K562 (cell line): ENCODE measurements at regions of chr12 and their contacts with region 1.

Region 1: GRCh38 chr12:122526683-122527477 is at the starts of genes KNTC1 and RSRC2:
- DNase-seq: peak; percentile 94 to 100 (median 96)
- ATAC-seq: peak; percentile 90
- H3K4me3 ChIP-seq: peak within 1 kb of the TSS; percentile 62
- H3K27ac ChIP-seq: peak within 1 kb of the TSS; percentile 99
- H3K4me1 ChIP-seq: peaks cover 4 to 21% of the 10 kb centered on the region in 2 experiments; a peak in 2 of 5 replicates
- H3K27me3 ChIP-seq: no peaks in the 10 kb centered on the region
- CTCF ChIP-seq: no peak
- EP300 ChIP-seq: peak; percentile 34
- POLR2A ChIP-seq: peak; percentile 99
- RAD21 ChIP-seq: no peak
- polyA plus RNA-seq, gene KNTC1: 38.9 to 57.8 TPM
- polyA plus RNA-seq, gene RSRC2: 52.6 to 72.3 TPM

Region 2: GRCh38 chr12:122064025-122064777 is 462.7 kb before region 1 on chr12:
- CTCF ChIA-PET with region 1: no interaction called
- POLR2A ChIA-PET with region 1: no interaction called
- in situ Hi-C with region 1: no loop called
- intact Hi-C with region 1: loop called (anchors 5 kb)
- DNase-seq: peak; percentile 96 to 99 (median 98)
- ATAC-seq: peak; percentile 97
- H3K4me3 ChIP-seq: peak overlapping the region; percentile 44
- H3K27ac ChIP-seq: peak overlapping the region; percentile 94
- H3K4me1 ChIP-seq: peaks cover 45 to 54% of the 10 kb centered on the region in 2 experiments
- H3K27me3 ChIP-seq: no peaks in the 10 kb centered on the region
- CTCF ChIP-seq: peak; percentile 71 to 88 (median 82)
- EP300 ChIP-seq: peak; percentile 50
- POLR2A ChIP-seq: peak; percentile 81
- RAD21 ChIP-seq: peak; percentile 44 to 62

Region 3: DNA sequence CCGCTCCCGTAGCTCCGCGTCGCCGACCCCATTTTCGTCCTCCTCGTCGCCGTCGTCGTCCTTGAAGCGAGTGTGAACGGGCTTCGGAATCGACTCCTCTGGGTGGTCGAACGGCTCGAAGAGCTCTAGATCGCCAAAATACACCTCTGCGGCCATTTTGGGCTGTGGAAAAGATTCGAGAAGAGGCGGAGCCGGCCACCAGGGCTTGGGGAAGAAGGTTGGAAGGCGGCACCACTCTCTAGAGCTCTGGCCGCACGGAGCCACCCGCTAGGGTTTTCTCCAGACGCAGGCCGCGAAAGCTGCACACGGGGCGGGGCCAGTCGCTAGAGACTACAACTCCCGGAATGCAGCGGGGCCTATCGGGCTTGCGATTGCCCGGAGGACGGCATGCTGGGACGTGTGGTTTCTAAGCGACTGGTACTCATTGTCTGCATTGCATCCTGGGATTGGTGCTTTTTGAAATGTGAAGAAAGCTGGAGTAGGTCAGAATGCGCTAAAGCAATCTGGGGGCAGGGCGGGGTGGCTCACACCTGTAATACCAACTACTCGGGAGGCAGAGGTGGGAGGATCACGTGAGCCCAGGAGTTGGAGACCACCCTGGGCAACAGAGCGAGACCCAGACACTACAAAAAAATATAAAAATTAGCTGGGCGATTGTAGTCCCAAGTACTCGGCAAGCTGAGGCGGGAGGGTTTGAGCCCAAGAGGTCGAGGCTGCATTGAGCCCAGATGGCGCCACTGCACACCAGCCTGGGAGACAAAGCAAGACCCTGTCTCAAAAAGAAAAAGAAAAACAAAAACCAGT is 26.0 kb before region 1 on chr12 and contains the start of gene ZCCHC8:
- CTCF ChIA-PET with region 1: no interaction called
- POLR2A ChIA-PET with region 1: interaction called, 62 read pairs
- in situ Hi-C with region 1: no loop called
- intact Hi-C with region 1: loop called (anchors 1 kb)
- DNase-seq: peak; percentile 89 to 99 (median 92)
- ATAC-seq: peak; percentile 91
- H3K4me3 ChIP-seq: peak within 1 kb of the TSS; percentile 94
- H3K27ac ChIP-seq: peak within 1 kb of the TSS; percentile 99
- H3K4me1 ChIP-seq: peaks cover 6 to 11% of the 10 kb centered on the region in 2 experiments; a peak in 3 of 5 replicates
- H3K27me3 ChIP-seq: no peaks in the 10 kb centered on the region
- CTCF ChIP-seq: peak in 2 of 3 experiments; percentile 12 to 16; a peak in 2 of 6 replicates
- EP300 ChIP-seq: peak; percentile 23; the same call in 1 of the 2 replicates
- POLR2A ChIP-seq: peak; percentile 96
- RAD21 ChIP-seq: no peak
- polyA plus RNA-seq, gene ZCCHC8: 14.8 to 20.7 TPM

Region 4: DNA sequence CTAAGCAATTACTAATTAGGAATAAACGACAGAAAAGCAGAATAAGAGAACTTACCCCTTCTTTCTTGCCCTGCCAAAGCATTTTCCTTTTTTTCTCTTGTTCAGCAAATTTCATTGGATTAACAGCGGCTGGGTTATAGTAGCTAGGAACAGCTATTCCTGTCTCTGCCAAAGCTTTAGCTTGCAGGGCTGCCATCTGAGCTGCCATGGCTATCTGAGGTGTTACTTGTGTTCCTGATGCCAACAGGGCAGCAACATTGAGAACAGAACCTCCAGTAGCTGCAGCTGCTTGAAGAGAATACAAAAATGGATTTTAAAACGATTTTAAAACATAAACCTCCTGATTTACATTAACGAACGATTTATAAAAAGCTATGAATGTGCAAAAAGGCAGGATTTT is 18.7 kb before region 1 on chr12:
- CTCF ChIA-PET with region 1: no interaction called
- POLR2A ChIA-PET with region 1: interaction called, 73 read pairs
- in situ Hi-C with region 1: no loop called
- intact Hi-C with region 1: no loop called
- DNase-seq: no peak
- ATAC-seq: no peak
- H3K4me3 ChIP-seq: no peak overlapping the region
- H3K27ac ChIP-seq: no peak overlapping the region
- H3K4me1 ChIP-seq: no peaks in the 10 kb centered on the region
- H3K27me3 ChIP-seq: no peaks in the 10 kb centered on the region
- CTCF ChIP-seq: no peak
- EP300 ChIP-seq: no peak
- POLR2A ChIP-seq: no peak; the same call in 1 of the 2 replicates
- RAD21 ChIP-seq: no peak

Region 5: GRCh38 chr12:122537021-122537420 is 10.1 kb after region 1 on chr12:
- CTCF ChIA-PET with region 1: no interaction called
- POLR2A ChIA-PET with region 1: interaction called, 18 read pairs
- in situ Hi-C with region 1: no loop called
- intact Hi-C with region 1: no loop called
- DNase-seq: no peak
- ATAC-seq: no peak
- H3K4me3 ChIP-seq: no peak overlapping the region
- H3K27ac ChIP-seq: no peak overlapping the region
- H3K4me1 ChIP-seq: no peaks in the 10 kb centered on the region
- H3K27me3 ChIP-seq: no peaks in the 10 kb centered on the region
- CTCF ChIP-seq: no peak
- EP300 ChIP-seq: no peak
- POLR2A ChIP-seq: no peak
- RAD21 ChIP-seq: no peak